GM13977 (cell line): ENCODE measurements at regions of chr20 and their contacts with region 1.

Region 1: GRCh38 chr20:50509935-50510705 is at the start of gene PTPN1:
- DNase-seq: peak; percentile 96
- CTCF ChIP-seq: no peak

Region 2: GRCh38 chr20:50561379-50562078 is 51.4 kb after region 1 on chr20:
- in situ Hi-C with region 1: no loop called
- DNase-seq: no peak
- CTCF ChIP-seq: no peak

Region 3: GRCh38 chr20:50575847-50576720 is 66.0 kb after region 1 on chr20:
- in situ Hi-C with region 1: loop called (anchors 10 kb)
- DNase-seq: no peak
- CTCF ChIP-seq: peak; percentile 71